ENCODE measurements at regions of chrX and their contacts with region 1.

Region 1: DNA sequence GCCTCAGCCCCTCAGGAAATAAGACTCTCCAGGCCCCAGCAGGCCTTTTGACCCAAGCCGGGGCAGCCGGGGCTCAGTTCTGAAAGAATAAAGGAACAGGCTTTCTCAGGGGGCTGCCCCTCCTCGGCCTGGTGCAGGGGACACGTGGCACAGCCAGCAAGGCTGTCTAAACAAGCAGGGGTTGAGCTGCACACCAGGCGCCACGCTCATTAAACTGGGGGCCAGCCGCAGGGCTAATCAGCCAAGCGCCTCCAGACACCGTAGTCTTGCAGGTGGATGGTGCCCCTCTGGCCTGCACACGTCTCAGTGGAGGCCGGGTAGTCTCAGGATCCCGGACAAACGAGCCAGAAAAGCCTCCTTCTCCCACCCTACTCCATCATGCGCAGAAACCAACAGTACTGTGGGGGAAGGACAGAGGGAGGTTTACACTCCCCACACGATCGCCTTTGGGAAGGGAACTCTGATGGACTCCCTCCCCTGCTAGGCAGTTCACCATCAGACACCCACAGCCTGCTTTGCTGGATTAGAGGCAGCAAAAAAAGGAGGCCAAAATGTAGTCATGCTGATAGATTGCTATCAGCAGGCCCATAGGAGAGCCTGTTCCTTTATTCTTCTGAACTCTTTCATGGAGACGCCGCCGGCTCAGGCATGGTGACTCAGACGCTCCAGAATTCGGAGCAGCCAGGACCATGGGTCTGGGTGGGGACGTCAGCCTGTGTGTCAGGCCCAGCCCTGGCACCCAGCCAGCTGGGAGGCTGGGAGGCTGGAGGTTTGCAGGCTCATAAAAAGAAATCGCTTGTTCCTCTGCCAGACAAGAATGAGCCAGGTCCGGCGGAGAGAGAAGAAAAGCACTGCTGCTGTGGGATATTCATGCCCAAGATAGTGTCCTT is 342.4 kb downstream of the BCOR start:
- DNase-seq: peak; percentile 92
- H3K4me3 ChIP-seq: no peak overlapping the region
- H3K27ac ChIP-seq: peak overlapping the region; percentile 95
- H3K4me1 ChIP-seq: peaks cover 64% of the 10 kb centered on the region
- H3K27me3 ChIP-seq: no peaks in the 10 kb centered on the region
- CTCF ChIP-seq: no peak
- POLR2A ChIP-seq: no peak

Region 2: DNA sequence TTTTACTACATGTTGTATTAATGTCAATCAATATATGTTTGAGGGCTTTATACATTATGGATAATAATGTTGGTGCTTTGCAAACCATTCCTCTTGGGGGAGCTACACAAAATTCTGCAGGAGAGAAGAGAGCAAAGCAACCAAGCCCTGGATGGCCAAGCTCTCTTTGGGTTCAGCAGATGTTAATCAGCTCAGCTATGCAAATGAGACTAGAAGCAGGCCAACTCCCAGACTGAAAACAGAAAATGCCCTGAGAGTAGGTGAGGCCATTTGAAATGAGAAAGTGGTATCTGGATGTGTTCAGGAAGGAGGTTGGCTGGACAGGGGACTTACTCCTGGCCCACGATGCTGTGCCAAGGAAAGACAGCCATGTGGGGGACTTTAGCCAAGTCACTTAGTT is 44.6 kb before region 1 on chrX:
- CTCF ChIA-PET with region 1: no interaction called
- POLR2A ChIA-PET with region 1: no interaction called
- dilution Hi-C with region 1: no loop called
- intact Hi-C with region 1: no loop called
- DNase-seq: no peak
- H3K4me3 ChIP-seq: no peak overlapping the region
- H3K27ac ChIP-seq: no peak overlapping the region
- H3K4me1 ChIP-seq: no peaks in the 10 kb centered on the region
- H3K27me3 ChIP-seq: no peaks in the 10 kb centered on the region
- CTCF ChIP-seq: no peak
- POLR2A ChIP-seq: no peak

Region 3: GRCh38 chrX:39736216-39737211 is 18.9 kb before region 1 on chrX:
- CTCF ChIA-PET with region 1: interaction called, 5 read pairs
- POLR2A ChIA-PET with region 1: no interaction called
- dilution Hi-C with region 1: no loop called
- intact Hi-C with region 1: loop called (anchors 1 kb)
- DNase-seq: peak; percentile 94
- H3K4me3 ChIP-seq: no peak overlapping the region
- H3K27ac ChIP-seq: peak overlapping the region; percentile 92
- H3K4me1 ChIP-seq: peaks cover 15% of the 10 kb centered on the region
- H3K27me3 ChIP-seq: no peaks in the 10 kb centered on the region
- CTCF ChIP-seq: no peak
- POLR2A ChIP-seq: peak; percentile 60

Region 4: DNA sequence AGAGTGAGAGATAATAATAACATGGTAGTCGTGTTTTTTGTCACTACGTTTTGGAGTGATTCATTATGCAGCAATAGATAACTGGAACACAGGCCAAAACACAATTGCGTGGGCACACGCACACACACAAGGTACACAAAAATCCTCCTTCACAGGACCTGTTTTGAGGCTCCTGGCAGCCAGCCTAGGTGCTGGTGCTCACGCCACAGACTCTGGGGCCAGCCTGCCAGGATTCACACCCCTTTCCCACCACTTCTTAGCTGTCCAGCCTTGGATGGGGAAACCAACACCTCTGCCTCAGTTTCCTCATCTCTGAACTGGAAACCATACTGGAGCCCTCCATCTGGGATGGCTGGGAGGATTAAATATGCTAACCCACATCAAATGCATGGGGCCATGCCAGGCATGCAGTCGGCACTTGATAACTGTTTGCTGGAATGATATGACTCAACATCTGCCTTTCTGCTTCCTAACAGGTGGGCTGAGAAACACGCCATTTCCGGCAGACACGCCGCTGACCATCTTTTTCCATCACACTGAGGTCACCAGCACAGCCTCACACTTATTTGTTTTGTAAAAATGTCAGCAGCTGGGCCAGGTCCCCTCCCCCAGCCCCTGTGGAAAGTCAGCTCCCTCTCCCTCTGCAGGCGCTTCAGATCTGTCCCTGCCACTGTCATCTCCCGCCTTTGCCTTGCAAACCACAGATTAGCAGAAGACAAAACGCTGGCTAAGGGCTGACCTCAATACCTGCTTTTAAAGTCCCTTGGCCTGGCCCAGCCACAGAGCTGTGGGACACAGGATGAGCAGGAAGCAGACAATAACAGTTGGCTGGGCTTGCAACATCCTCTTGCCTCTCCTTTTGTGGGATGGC is 104.8 kb after region 1 on chrX:
- CTCF ChIA-PET with region 1: no interaction called
- POLR2A ChIA-PET with region 1: no interaction called
- dilution Hi-C with region 1: no loop called
- intact Hi-C with region 1: loop called (anchors 5 kb)
- DNase-seq: peak; percentile 81
- H3K4me3 ChIP-seq: no peak overlapping the region
- H3K27ac ChIP-seq: peak overlapping the region; percentile 73
- H3K4me1 ChIP-seq: peaks cover 26% of the 10 kb centered on the region
- H3K27me3 ChIP-seq: no peaks in the 10 kb centered on the region
- CTCF ChIP-seq: no peak
- POLR2A ChIP-seq: no peak